ENCODE measurements at regions of chr6 and their contacts with region 1.

Region 1: DNA sequence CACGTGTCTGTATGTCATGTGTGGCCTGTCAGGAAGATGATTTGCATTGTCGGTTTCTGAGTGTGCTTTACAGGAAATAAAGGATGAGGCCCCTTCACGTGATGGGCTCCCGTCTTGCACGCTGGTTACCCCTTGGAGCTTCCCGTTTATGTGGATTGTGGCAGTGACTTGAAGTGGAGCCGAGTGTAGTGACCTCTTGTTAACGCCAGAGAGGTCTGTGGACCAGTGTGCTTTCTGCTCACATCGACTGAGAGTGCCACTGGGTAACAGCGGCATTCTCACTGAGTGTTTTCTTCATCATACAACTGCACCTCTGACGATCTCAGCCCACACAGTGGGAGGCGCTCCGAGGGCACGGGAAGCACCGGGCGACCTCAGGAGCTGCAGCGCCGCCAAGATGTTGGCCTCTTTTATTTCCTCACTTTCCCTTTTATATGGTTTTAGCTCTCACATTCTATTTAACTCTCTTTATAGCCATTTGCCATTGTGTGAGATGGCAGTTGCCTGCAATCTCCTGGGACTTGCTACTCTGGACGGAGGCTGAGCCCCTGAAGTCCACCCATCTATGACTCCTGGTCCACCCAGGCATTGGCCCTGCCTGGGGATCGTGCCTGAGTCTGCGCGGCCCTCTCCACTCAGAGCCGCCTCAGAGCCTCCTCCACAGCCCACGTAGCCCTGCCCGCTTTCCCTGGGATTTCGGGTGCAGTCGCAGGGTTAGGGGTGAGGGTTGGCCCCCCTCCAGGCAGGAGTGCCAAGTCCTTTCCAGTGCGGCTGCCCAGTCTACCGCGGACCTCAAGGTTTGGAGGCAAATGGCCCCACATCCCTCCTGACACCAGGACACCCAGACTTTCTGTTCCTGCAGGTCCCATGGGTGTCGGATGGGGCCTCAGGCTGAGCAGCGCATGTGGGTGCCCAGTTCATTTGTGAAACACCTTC is 238.9 kb downstream of the ERMARD start:
- DNase-seq: peak in 8 of 9 donors; percentile 24 to 57 (median 49)
- ATAC-seq: peak; percentile 85
- H3K4me3 ChIP-seq: peak overlapping the region; percentile 30
- H3K4me3 Mint-ChIP-seq: peak overlapping the region; percentile 63 to 85 (median 76)
- H3K27ac ChIP-seq: peak overlapping the region; percentile 29
- H3K27ac Mint-ChIP-seq: peak overlapping the region; percentile 1 to 83 (median 78)
- H3K4me1 ChIP-seq: peaks cover 0 to 18% of the 10 kb centered on the region in 2 donors
- H3K4me1 Mint-ChIP-seq: peaks cover 22 to 29% (median 26%) of the 10 kb centered on the region in 7 donors
- H3K27me3 ChIP-seq: no peaks in the 10 kb centered on the region
- H3K27me3 Mint-ChIP-seq: no peaks in the 10 kb centered on the region

Region 2: GRCh38 chr6:169959136-169960002 is 31.0 kb before region 1 on chr6:
- CTCF ChIA-PET with region 1: no interaction called
- POLR2A ChIA-PET with region 1: no interaction called
- intact Hi-C with region 1: loop called in 1 of 2 experiments (anchors 2 kb)
- DNase-seq: peak in 7 of 9 donors; percentile 28 to 83 (median 67)
- ATAC-seq: peak; percentile 83
- H3K4me3 ChIP-seq: no peak overlapping the region
- H3K4me3 Mint-ChIP-seq: peak overlapping the region in 9 of 10 donors; percentile 29 to 79 (median 67)
- H3K27ac ChIP-seq: peak overlapping the region; percentile 53
- H3K27ac Mint-ChIP-seq: peak overlapping the region in 8 of 9 donors; percentile 69 to 98 (median 87)
- H3K4me1 ChIP-seq: peaks cover 0 to 6% of the 10 kb centered on the region in 2 donors
- H3K4me1 Mint-ChIP-seq: peaks cover 0 to 31% (median 20%) of the 10 kb centered on the region in 7 donors
- H3K27me3 ChIP-seq: no peaks in the 10 kb centered on the region
- H3K27me3 Mint-ChIP-seq: peaks cover 0 to 22% (median 10%) of the 10 kb centered on the region in 5 donors

Region 3: DNA sequence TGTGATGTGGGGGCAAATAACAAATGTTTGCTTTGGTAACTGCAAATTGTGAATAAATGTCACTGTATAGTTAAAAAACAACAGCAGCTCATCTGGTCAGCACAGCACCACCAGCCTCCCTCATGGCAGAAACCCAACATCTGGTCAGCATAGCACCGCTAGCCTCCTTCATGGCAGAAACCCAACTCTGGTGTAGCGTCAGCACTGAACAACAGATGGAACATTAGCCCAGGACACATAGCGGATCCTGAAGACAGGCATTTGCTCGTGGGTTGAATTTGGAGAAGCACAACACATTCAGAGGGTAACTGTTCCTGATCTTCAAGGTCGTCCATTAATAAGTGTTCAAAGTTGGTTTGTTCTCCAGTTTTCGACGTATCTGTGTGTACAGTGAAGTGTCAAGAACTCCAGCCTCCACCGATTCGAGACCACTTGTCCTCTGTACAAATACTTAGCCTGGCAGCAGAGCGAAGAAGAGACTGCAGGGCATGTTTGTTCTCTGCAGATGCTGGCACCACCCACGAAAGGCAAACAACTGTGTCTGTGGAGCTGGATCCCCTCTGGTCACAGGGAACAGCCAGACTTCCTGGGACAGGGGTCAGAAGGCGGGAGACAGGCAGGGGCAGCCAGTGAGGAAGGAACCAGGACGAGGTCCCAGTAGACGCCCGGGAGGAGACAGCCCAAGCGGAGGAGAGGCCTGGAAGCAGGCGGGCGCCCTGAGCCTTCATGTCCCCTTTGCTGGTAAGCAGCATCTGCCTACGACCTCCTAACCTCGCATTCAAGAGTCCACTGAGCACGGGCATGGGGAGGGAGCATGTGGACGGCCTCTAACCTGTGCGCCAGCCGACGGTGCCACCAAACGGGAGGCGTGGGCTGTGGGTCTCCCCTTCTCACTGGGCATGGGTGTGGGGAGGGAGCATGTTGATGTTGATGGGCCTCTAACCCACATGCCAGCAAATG is 34.9 kb after region 1 on chr6:
- CTCF ChIA-PET with region 1: no interaction called
- POLR2A ChIA-PET with region 1: no interaction called
- intact Hi-C with region 1: no loop called
- DNase-seq: no peak
- ATAC-seq: no peak
- H3K4me3 ChIP-seq: no peak overlapping the region
- H3K4me3 Mint-ChIP-seq: no peak overlapping the region
- H3K27ac ChIP-seq: no peak overlapping the region
- H3K27ac Mint-ChIP-seq: no peak overlapping the region
- H3K4me1 ChIP-seq: no peaks in the 10 kb centered on the region
- H3K4me1 Mint-ChIP-seq: peaks cover 0 to 10% (median 0%) of the 10 kb centered on the region in 7 donors
- H3K27me3 ChIP-seq: no peaks in the 10 kb centered on the region
- H3K27me3 Mint-ChIP-seq: peaks cover 9 to 17% (median 11%) of the 10 kb centered on the region in 5 donors

Measured in naive thymus-derived CD4-positive, alpha-beta T cell (primary cell).